Naive thymus-derived CD4-positive, alpha-beta T cell (primary cell): ENCODE measurements at regions of chr2 and their contacts with region 1.

Region 1: GRCh38 chr2:102301867-102302362 is 9.4 kb upstream of the IL1RL1 start:
- DNase-seq: peak in 8 of 9 donors; percentile 7 to 47 (median 32)
- ATAC-seq: peak; percentile 94
- H3K4me3 ChIP-seq: no peak overlapping the region
- H3K4me3 Mint-ChIP-seq: peak overlapping the region in 4 of 10 donors; percentile 6 to 63 (median 34)
- H3K27ac ChIP-seq: no peak overlapping the region
- H3K27ac Mint-ChIP-seq: peak overlapping the region in 1 of 9 donors; percentile 54
- H3K4me1 ChIP-seq: peaks cover 0 to 6% of the 10 kb centered on the region in 2 donors
- H3K4me1 Mint-ChIP-seq: peaks cover 10 to 53% (median 18%) of the 10 kb centered on the region in 7 donors
- H3K27me3 ChIP-seq: no peaks in the 10 kb centered on the region
- H3K27me3 Mint-ChIP-seq: peaks cover 0 to 25% (median 8%) of the 10 kb centered on the region in 5 donors

Region 2: GRCh38 chr2:102271844-102272243 is 30.1 kb before region 1 on chr2:
- CTCF ChIA-PET with region 1: interaction called, 4 read pairs
- POLR2A ChIA-PET with region 1: no interaction called
- intact Hi-C with region 1: loop called in 1 of 2 experiments (anchors 2 kb)
- DNase-seq: peak in 4 of 9 donors; percentile 16 to 32 (median 26)
- ATAC-seq: peak; percentile 68
- H3K4me3 ChIP-seq: no peak overlapping the region
- H3K4me3 Mint-ChIP-seq: peak overlapping the region in 4 of 10 donors; percentile 5 to 55 (median 28)
- H3K27ac ChIP-seq: no peak overlapping the region
- H3K27ac Mint-ChIP-seq: peak overlapping the region in 3 of 9 donors; percentile 18 to 32 (median 28)
- H3K4me1 ChIP-seq: peaks cover 0 to 10% of the 10 kb centered on the region in 2 donors
- H3K4me1 Mint-ChIP-seq: peaks cover 7 to 54% (median 10%) of the 10 kb centered on the region in 7 donors
- H3K27me3 ChIP-seq: no peaks in the 10 kb centered on the region
- H3K27me3 Mint-ChIP-seq: peaks cover 0 to 22% (median 0%) of the 10 kb centered on the region in 5 donors

Region 3: DNA sequence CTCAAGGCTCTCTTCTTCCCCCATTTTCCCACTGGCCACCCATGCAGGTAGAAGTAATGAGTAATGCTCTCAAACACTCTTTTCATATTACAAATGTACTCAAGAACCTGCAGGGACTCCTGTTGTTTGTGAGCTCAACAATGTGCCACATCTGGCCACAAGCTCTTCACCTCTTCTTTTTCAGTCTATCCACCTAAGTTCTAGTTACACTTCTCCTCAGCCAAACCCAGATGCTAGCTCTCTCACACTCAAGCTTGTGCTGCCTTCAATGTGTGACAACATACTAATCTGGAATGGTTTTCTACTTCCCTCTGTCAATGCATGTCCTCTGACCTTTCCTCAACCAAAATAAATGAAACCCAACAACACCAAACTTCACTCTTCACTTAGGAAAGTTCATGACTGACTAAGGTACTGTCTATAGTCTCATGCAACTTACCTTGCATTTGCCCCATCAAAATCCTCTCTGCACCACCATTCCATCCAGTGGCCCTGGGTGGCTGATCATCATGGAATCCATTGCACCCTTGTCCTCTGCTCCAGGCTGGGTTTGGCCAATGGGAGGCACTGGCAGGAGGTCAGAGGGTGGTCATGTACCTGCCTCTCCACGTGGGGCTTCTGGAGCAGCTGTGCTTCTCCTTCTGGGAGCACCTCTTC is 48.4 kb after region 1 on chr2:
- CTCF ChIA-PET with region 1: no interaction called
- POLR2A ChIA-PET with region 1: no interaction called
- intact Hi-C with region 1: loop called (anchors 2 to 5 kb)
- DNase-seq: no peak
- ATAC-seq: no peak
- H3K4me3 ChIP-seq: no peak overlapping the region
- H3K4me3 Mint-ChIP-seq: no peak overlapping the region
- H3K27ac ChIP-seq: no peak overlapping the region
- H3K27ac Mint-ChIP-seq: peak overlapping the region in 1 of 9 donors; percentile 3
- H3K4me1 ChIP-seq: no peaks in the 10 kb centered on the region
- H3K4me1 Mint-ChIP-seq: peaks cover 0 to 7% (median 4%) of the 10 kb centered on the region in 7 donors
- H3K27me3 ChIP-seq: no peaks in the 10 kb centered on the region
- H3K27me3 Mint-ChIP-seq: peaks cover 0 to 4% (median 0%) of the 10 kb centered on the region in 5 donors

Region 4: DNA sequence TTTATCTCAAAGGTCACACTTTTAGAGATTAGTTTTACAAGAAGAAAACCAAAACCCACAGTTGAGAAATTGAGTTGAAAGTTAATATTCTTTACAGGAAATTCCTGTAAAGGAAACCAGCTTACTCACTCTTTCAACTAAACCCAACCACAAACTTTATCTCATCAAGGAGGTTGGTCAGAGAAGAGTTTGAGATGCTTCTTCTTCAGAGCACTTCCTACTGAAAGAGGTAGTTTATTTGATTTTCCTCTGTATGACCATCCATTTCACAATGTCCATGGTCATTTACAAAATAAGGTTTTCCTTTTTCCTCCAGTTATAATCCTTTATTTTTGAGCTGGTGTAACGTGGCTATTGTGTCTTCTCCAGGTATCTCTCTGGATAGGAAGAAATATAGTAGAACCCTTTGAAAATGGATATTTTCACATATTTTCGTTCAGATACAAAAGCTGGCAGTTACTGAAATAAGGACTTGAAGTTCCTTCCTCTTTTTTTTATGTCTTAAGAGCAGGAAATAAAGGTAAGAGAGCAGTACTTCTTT is 116.6 kb after region 1 on chr2:
- CTCF ChIA-PET with region 1: interaction called, 3 read pairs
- POLR2A ChIA-PET with region 1: no interaction called
- intact Hi-C with region 1: loop called in 1 of 2 experiments (anchors 1 kb)
- DNase-seq: peak in 6 of 9 donors; percentile 24 to 59 (median 49)
- ATAC-seq: peak; percentile 85
- H3K4me3 ChIP-seq: peak overlapping the region; percentile 18
- H3K4me3 Mint-ChIP-seq: peak overlapping the region; percentile 38 to 87 (median 74)
- H3K27ac ChIP-seq: no peak overlapping the region
- H3K27ac Mint-ChIP-seq: peak overlapping the region in 7 of 9 donors; percentile 64 to 95 (median 78)
- H3K4me1 ChIP-seq: peaks cover 29 to 49% of the 10 kb centered on the region in 2 donors
- H3K4me1 Mint-ChIP-seq: peaks cover 27 to 67% (median 48%) of the 10 kb centered on the region in 7 donors
- H3K27me3 ChIP-seq: no peaks in the 10 kb centered on the region
- H3K27me3 Mint-ChIP-seq: no peaks in the 10 kb centered on the region

Region 5: DNA sequence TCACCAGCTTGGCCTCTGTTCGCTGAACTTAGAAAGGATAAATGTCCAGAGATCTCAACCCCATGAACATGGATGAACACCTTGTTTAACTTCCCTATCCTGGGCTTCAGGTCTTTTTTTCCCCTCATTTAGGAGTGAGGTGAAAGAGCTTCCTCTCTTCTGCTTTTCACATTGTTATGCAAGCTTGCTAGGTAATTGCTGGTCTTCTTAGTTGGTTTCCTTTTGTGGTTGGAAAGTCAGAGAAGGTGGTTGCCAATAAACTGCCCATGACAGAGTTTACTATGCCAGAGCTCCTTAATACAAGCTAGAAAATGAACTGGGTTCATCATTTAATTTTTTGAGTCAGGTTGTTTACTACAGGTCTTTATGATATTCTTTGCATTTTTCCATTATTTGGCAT is 187.7 kb after region 1 on chr2:
- CTCF ChIA-PET with region 1: no interaction called
- POLR2A ChIA-PET with region 1: no interaction called
- intact Hi-C with region 1: no loop called
- DNase-seq: no peak
- ATAC-seq: no peak
- H3K4me3 ChIP-seq: no peak overlapping the region
- H3K4me3 Mint-ChIP-seq: no peak overlapping the region
- H3K27ac ChIP-seq: no peak overlapping the region
- H3K27ac Mint-ChIP-seq: no peak overlapping the region
- H3K4me1 ChIP-seq: no peaks in the 10 kb centered on the region
- H3K4me1 Mint-ChIP-seq: peaks cover 0 to 11% (median 0%) of the 10 kb centered on the region in 7 donors
- H3K27me3 ChIP-seq: no peaks in the 10 kb centered on the region
- H3K27me3 Mint-ChIP-seq: peaks cover 18 to 37% (median 27%) of the 10 kb centered on the region in 5 donors